Ovary (tissue), 10 donors: ENCODE measurements at regions of chr10 and their contacts with region 1.

Region 1: DNA sequence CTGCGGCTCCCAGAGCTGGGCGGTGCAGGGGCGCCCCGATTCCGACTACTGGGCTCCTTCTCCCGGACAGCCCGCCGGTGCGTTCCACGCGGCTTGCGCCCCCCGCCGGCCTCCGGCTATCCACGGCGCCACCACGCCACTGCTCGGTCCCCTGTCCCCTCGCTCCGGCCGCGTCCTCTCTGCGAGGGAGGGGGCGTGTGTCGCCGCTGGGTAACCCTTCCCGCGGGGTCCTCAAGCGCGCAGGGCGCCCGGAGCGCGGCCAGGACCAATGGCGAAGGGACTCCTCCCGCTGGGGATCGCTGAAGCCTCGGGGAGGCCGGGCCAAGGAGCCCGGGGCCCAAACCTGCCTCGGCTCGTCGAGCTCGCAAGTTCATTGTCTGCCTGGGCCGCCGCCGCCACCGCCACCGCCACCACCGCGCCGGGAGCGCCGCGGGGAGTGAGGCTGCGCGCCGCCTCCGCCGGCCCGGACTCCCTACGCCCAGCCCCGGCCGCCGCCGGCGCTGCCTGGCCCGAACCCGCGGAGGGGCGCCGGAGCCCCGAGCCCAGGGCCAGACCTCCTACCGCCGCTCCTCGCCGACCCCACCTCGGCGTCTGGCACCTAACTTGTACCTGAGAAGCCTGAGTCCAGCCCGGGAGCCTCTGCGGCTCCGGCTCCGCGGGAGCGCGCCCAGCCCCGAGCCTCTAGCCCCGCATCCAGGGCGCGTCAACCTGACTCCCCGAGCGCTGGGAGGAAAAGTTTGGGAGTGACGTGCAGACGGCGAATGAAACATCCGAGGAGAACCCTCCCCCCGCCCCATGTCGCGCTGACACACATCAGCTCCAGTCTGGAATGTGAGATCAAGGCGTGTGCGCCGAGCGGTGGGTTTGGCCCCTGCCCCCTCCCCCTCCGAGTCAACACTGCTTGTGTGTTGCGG is at the start of gene CHST15:
- DNase-seq: peak; percentile 67 to 76 (median 72)
- H3K4me3 ChIP-seq: peak within 1 kb of the TSS; percentile 59
- H3K27ac ChIP-seq: peak within 1 kb of the TSS; percentile 94
- H3K4me1 ChIP-seq: peaks cover 15% of the 10 kb centered on the region
- H3K27me3 ChIP-seq: no peaks in the 10 kb centered on the region
- CTCF ChIP-seq: peak in 2 of 3 donors; percentile 18 to 40
- EP300 ChIP-seq: no peak
- POLR2A ChIP-seq: no peak
- total RNA-seq, gene CHST15: 45.8 to 93.0 (median 67.1) TPM

Region 2: DNA sequence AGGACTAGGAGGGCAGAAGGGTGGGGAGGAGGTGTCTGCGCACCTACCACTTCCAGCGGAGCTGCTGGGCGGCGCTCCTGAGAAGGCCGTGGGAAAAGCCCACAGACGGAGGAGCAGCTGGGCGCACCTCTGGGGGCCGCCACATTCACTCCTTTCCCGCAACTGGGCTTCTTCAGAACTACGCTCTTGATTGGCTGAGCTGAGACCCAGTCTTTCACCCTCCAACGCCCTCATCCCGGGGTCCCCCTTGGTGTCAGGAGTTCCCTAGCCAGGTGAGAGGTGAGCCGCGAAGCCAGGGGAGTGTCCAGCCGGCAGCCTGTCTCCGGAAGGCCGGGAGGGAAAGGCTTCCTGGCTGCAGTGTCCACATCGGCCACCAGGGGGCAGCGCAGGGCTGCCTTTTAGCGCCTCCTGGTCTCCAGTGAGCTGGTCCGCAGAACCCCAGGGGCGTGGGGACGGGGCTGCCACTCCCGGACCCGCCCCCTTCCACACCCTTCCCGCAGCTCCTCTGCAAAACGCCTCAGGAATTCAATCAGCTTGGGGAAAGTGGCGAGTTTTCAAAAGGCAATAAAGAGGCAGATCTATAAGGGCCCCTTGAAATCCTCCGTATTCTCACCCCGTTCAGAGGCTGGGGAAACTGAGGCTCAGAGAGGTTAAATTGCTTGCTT is 98.6 kb before region 1 on chr10:
- intact Hi-C with region 1: loop called in 3 of 4 experiments (anchors 2 to 10 kb)
- DNase-seq: peak; percentile 89 to 97 (median 93)
- H3K4me3 ChIP-seq: no peak overlapping the region
- H3K27ac ChIP-seq: no peak overlapping the region
- H3K4me1 ChIP-seq: peaks cover 6% of the 10 kb centered on the region
- H3K27me3 ChIP-seq: no peaks in the 10 kb centered on the region
- CTCF ChIP-seq: peak; percentile 99 to 100 (median 99)
- EP300 ChIP-seq: no peak
- POLR2A ChIP-seq: no peak

Region 3: GRCh38 chr10:124000792-124001201 is 92.3 kb before region 1 on chr10:
- intact Hi-C with region 1: loop called (anchors 2 to 10 kb)
- DNase-seq: peak in 2 of 5 donors; percentile 12 to 14
- H3K4me3 ChIP-seq: no peak overlapping the region
- H3K27ac ChIP-seq: no peak overlapping the region
- H3K4me1 ChIP-seq: peaks cover 2% of the 10 kb centered on the region
- H3K27me3 ChIP-seq: no peaks in the 10 kb centered on the region
- CTCF ChIP-seq: no peak
- EP300 ChIP-seq: no peak
- POLR2A ChIP-seq: no peak

Region 4: GRCh38 chr10:124032971-124033886 is 59.9 kb before region 1 on chr10:
- intact Hi-C with region 1: loop called in 1 of 4 experiments (anchors 5 kb)
- DNase-seq: peak; percentile 59 to 74 (median 63)
- H3K4me3 ChIP-seq: no peak overlapping the region
- H3K27ac ChIP-seq: peak overlapping the region; percentile 23 to 69
- H3K4me1 ChIP-seq: peaks cover 28% of the 10 kb centered on the region
- H3K27me3 ChIP-seq: no peaks in the 10 kb centered on the region
- CTCF ChIP-seq: no peak
- EP300 ChIP-seq: no peak
- POLR2A ChIP-seq: no peak

Region 5: GRCh38 chr10:124388823-124389612 is 295.9 kb after region 1 on chr10:
- intact Hi-C with region 1: loop called in 1 of 4 experiments (anchors 5 kb)
- DNase-seq: peak; percentile 87 to 97 (median 93)
- H3K4me3 ChIP-seq: peak overlapping the region; percentile 51
- H3K27ac ChIP-seq: peak overlapping the region in 1 of 2 donors; percentile 41
- H3K4me1 ChIP-seq: peaks cover 2% of the 10 kb centered on the region
- H3K27me3 ChIP-seq: no peaks in the 10 kb centered on the region
- CTCF ChIP-seq: peak; percentile 91 to 98 (median 96)
- EP300 ChIP-seq: no peak
- POLR2A ChIP-seq: no peak